ENCODE measurements at regions of chr3 and their contacts with region 1.

Region 1: GRCh38 chr3:45037734-45038455 is 11.8 kb downstream of the CLEC3B start:
- DNase-seq: peak; percentile 94
- H3K4me3 Mint-ChIP-seq: no peak overlapping the region
- H3K27ac Mint-ChIP-seq: no peak overlapping the region
- H3K4me1 Mint-ChIP-seq: peaks cover 55% of the 10 kb centered on the region
- H3K27me3 Mint-ChIP-seq: peaks cover 32% of the 10 kb centered on the region

Region 2: DNA sequence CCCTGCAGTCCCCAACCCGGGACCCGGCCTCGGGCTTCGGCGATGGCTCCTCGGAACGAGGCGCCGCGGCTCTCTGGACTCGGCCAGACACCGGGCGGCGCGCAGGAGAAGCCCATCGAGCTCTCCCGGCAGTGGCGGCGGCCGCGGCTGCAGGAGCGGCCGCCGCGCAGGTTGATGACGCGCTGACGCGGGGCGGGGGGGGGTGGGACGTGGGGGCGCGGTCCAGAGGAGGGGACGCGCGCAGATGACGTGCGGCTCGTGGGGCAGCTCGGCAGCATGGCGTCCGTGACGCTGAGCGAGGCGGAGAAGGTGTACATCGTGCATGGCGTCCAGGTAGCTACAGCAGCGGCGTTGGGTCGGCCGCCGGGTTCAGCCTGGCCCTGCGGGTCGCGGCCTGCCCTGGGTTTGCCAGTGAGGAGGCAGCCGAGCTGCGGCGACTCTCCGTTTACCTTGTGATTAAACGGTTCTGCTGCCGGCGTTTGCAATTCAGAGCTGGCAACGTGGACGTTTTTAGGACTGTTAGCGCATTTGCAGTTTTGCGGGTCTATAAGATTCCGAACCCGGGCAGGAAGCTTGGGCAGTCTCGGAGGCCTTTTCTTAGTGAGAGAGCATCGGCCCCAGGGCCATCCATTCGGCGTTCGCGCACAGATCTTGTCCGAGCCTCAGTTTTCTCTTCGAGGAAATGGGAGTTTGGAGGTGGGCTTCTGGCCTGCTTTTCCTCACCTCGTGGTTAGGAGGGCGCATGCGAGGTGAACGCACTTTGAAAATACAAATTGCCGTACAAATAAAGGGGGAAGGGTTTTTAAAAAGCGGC is 61.7 kb before region 1 on chr3 and contains the starts of genes EXOSC7 and ZDHHC3:
- CTCF ChIA-PET with region 1: no interaction called
- POLR2A ChIA-PET with region 1: interaction called, 14 read pairs
- DNase-seq: peak; percentile 89
- H3K4me3 Mint-ChIP-seq: peak within 1 kb of the TSS; percentile 88
- H3K27ac Mint-ChIP-seq: peak within 1 kb of the TSS; percentile 83
- H3K4me1 Mint-ChIP-seq: peaks cover 59% of the 10 kb centered on the region
- H3K27me3 Mint-ChIP-seq: no peaks in the 10 kb centered on the region
- total RNA-seq, gene EXOSC7: 38.0 to 40.8 TPM
- total RNA-seq, gene ZDHHC3: 46.6 to 51.6 TPM

Region 3: GRCh38 chr3:44992555-44993470 is 45.1 kb before region 1 on chr3:
- CTCF ChIA-PET with region 1: interaction called, 33 read pairs
- POLR2A ChIA-PET with region 1: interaction called, 6 read pairs
- DNase-seq: peak; percentile 31
- H3K4me3 Mint-ChIP-seq: no peak overlapping the region
- H3K27ac Mint-ChIP-seq: no peak overlapping the region
- H3K4me1 Mint-ChIP-seq: peaks cover 25% of the 10 kb centered on the region
- H3K27me3 Mint-ChIP-seq: no peaks in the 10 kb centered on the region

Region 4: GRCh38 chr3:45011756-45012508 is 26.0 kb before region 1 on chr3:
- CTCF ChIA-PET with region 1: interaction called, 13 read pairs
- POLR2A ChIA-PET with region 1: interaction called, 5 read pairs
- DNase-seq: no peak
- H3K4me3 Mint-ChIP-seq: no peak overlapping the region
- H3K27ac Mint-ChIP-seq: peak overlapping the region; percentile 84
- H3K4me1 Mint-ChIP-seq: peaks cover 39% of the 10 kb centered on the region
- H3K27me3 Mint-ChIP-seq: no peaks in the 10 kb centered on the region

Region 5: DNA sequence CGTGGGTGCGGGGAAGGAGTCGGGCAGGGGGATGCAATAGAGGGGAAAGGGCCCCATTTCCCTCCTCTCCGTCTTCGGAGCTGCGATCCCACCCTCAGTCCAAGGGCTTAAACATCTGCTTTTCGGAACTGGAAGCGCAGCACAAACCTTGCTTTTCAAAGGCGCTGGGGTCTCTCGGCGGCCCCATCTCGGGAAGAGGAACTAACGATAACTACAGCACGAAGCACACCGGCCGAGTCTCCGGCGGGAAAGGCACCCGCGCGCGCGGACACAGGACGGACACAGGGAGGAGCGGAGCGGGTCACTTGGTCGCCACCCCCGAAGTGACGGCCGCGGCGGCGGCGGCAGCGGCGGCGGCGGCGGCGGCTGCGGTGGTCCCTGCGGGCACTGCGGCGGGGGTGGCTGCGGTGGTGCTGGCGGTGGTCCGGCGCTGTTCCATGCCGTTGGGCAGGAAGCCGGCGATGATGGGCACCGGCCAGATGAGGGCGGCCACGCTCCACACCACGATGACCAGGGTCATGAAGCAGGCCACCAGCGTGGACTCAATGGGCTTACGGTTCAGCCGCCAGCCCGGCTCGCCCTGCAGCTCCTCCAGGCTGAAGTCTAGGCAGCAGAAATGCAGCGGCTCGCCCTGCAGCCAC is 187.0 kb after region 1 on chr3:
- CTCF ChIA-PET with region 1: interaction called, 33 read pairs
- POLR2A ChIA-PET with region 1: interaction called, 4 read pairs
- DNase-seq: peak; percentile 36
- H3K4me3 Mint-ChIP-seq: peak overlapping the region; percentile 61
- H3K27ac Mint-ChIP-seq: peak overlapping the region; percentile 11
- H3K4me1 Mint-ChIP-seq: peaks cover 10% of the 10 kb centered on the region
- H3K27me3 Mint-ChIP-seq: peaks cover 77% of the 10 kb centered on the region

Region 6: DNA sequence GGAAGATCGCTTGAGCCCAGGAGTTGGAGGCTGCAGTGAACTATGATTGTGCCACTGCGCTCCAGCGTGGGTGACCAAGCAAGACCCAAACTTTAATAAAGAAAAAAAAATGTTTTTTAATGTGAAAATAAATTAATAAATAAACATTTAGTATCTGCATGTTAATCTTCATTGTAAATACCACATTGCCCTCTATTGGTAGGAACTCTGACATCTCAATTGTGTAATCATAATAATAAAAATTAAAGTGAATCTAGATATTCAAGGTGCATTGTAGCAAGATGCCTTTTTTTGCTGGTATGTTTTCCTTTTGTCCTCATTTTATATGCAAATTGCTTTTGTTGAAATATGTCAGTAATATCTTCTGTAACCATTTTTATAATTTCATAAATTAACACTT is 461.6 kb after region 1 on chr3:
- CTCF ChIA-PET with region 1: interaction called, 11 read pairs
- POLR2A ChIA-PET with region 1: no interaction called
- DNase-seq: no peak
- H3K4me3 Mint-ChIP-seq: no peak overlapping the region
- H3K27ac Mint-ChIP-seq: no peak overlapping the region
- H3K4me1 Mint-ChIP-seq: no peaks in the 10 kb centered on the region
- H3K27me3 Mint-ChIP-seq: no peaks in the 10 kb centered on the region